H1 (cell line): ENCODE measurements at regions of chr9 and their contacts with region 1.

Region 1: DNA sequence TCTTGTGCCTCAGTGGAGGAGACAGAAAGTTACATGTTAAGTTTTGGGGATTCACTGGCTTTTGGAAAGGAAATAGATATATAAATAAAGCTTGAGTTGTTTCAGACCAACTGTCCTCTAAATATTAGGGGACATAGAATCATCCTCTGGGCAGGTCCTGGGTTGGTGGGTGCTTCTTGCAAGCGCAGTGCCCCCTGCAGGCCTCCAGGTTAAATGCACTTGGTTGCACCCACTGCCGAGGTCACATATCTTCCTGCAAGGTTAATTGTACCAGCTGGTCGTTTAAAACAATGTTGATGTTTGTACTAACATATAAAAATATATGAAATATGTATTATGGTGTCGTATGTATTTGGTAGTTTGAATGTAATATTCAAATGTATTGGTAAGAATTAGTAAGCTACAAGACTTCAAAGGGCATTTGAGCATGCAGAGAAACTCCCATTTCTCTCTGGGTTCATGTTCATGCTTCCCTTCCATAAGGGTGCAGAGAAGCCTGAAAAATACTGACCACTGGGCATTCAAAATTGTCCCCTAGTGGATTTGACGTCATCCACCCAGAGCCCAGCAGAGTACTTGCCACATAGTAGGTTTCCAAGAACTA is 87.0 kb downstream of the ZNF618 start:
- DNase-seq: peak; percentile 31 to 75
- H3K4me3 ChIP-seq: no peak overlapping the region
- H3K27ac ChIP-seq: no peak overlapping the region
- H3K4me1 ChIP-seq: peaks cover 0 to 3% (median 0%) of the 10 kb centered on the region in 4 experiments; a peak in 2 of 7 replicates
- H3K27me3 ChIP-seq: no peaks in the 10 kb centered on the region
- CTCF ChIP-seq: peak; percentile 72 to 81 (median 80)
- EP300 ChIP-seq: no peak
- POLR2A ChIP-seq: no peak
- RAD21 ChIP-seq: peak; percentile 66 to 74

Region 2: GRCh38 chr9:113807173-113808061 is 155.7 kb before region 1 on chr9:
- CTCF ChIA-PET with region 1: interaction called, 21 read pairs
- POLR2A ChIA-PET with region 1: no interaction called
- DNase-seq: peak in 1 of 2 experiments; percentile 80
- H3K4me3 ChIP-seq: no peak overlapping the region
- H3K27ac ChIP-seq: no peak overlapping the region
- H3K4me1 ChIP-seq: 0 out of 7 replicates have a peak, but pooled peaks cover 0 to 3% (median 0%) of the 10 kb centered on the region in 4 experiments
- H3K27me3 ChIP-seq: no peaks in the 10 kb centered on the region
- CTCF ChIP-seq: peak; percentile 53 to 92 (median 77)
- EP300 ChIP-seq: no peak
- POLR2A ChIP-seq: no peak
- RAD21 ChIP-seq: peak; percentile 83 to 84

Region 3: GRCh38 chr9:113915817-113916434 is 47.2 kb before region 1 on chr9:
- CTCF ChIA-PET with region 1: interaction called, 13 read pairs
- POLR2A ChIA-PET with region 1: no interaction called
- DNase-seq: no peak
- H3K4me3 ChIP-seq: no peak overlapping the region
- H3K27ac ChIP-seq: no peak overlapping the region
- H3K4me1 ChIP-seq: 0 out of 7 replicates have a peak, but pooled peaks cover 0 to 1% (median 0%) of the 10 kb centered on the region in 4 experiments
- H3K27me3 ChIP-seq: no peaks in the 10 kb centered on the region
- CTCF ChIP-seq: no peak
- EP300 ChIP-seq: no peak
- POLR2A ChIP-seq: no peak
- RAD21 ChIP-seq: no peak

Region 4: DNA sequence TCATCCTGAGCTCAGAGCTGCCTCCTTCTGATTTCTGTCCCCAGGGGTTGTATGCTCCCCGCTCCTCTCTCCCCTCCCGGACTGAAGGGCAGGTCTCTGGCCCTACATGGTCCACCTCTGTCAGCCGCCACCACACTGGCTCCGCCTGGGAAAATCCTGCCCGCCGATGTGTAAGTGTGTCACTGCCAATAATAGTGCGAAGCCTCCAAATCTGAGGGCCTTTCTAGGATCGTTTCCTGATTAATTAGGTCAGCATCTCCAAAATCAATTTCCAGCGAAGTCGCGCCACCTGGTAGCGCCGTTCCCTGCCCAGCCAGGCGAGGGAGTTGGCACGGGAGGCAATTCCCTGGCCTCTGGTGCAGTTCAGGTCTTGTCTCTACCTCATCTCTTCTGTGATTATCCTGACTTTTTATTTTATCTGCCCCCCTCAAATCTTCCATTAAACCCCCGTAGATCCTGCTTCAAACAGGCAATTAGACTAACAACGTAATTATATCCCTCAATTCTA is 13.5 kb before region 1 on chr9:
- CTCF ChIA-PET with region 1: interaction called, 25 read pairs
- POLR2A ChIA-PET with region 1: interaction called, 3 read pairs
- DNase-seq: peak in 1 of 2 experiments; percentile 39
- H3K4me3 ChIP-seq: no peak overlapping the region
- H3K27ac ChIP-seq: no peak overlapping the region
- H3K4me1 ChIP-seq: no peaks in the 10 kb centered on the region; a peak in 1 of 7 replicates
- H3K27me3 ChIP-seq: no peaks in the 10 kb centered on the region
- CTCF ChIP-seq: peak in 2 of 3 experiments; percentile 12 to 22; a peak in 2 of 4 replicates
- EP300 ChIP-seq: no peak
- POLR2A ChIP-seq: no peak
- RAD21 ChIP-seq: no peak

Region 5: DNA sequence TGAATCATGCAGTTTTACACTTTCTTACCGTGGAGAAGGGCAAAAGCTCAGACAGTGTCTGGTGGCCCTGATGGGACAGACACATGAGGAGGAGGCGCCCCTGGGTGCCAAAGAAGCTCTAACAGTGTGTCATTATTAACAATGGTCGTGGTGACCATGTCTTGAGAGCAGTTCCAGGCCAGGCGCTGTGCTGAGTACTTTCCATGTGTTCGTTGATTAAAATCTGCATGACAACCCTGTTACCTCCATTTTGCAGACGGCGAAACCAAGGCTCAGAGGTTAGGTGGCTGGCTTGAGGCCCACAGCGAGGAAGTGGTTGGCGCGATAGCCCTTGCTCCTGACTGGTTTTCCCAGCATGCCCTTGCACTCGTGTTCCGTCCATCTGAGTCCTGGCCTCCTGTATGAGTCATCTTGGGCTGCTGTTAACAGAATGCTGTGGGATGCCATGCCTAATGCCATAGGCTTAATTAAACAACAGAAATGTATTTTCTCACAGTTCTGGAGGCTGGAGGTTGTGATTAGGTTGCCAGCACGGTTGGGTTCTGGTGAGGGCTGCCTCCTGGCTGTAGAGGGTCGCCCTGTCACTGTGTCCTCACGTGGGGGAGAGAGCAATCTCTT is 23.0 kb after region 1 on chr9:
- CTCF ChIA-PET with region 1: interaction called, 55 read pairs
- POLR2A ChIA-PET with region 1: interaction called, 3 read pairs
- DNase-seq: no peak
- H3K4me3 ChIP-seq: no peak overlapping the region
- H3K27ac ChIP-seq: no peak overlapping the region
- H3K4me1 ChIP-seq: no peaks in the 10 kb centered on the region; a peak in 1 of 7 replicates
- H3K27me3 ChIP-seq: no peaks in the 10 kb centered on the region
- CTCF ChIP-seq: no peak
- EP300 ChIP-seq: no peak
- POLR2A ChIP-seq: no peak
- RAD21 ChIP-seq: no peak

Region 6: DNA sequence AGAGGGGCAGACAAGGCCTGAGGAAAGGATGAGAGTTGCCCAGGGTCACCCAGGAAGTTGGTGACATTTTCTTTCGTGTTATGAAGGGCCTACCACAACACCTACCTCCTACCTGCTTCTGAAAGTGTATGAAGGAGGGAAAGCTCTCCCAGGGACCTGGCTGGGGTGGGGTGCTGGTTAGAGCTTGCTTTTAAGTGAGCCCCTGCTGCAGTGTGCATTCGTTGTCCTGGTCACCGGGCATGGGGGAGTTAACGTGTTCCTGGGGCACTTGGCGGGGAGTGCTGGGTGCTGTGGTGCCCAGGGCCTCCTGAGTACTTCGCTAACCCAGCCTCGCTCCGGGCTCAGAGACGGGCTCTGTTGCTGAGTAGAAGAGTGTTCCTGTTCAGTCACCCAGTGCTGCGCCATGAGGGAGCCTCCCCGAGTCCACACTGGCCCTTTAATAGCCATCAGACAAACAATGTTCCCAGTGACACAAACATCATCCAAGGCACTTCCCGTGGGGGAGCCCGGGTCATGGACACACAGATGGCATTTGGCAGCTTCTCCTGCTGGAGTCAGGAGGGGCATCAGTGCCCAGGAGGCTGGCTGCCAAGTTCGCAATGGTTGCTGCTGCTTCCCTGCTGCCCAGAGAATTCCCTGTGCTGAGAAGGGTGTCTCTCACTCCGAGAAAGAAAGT is 29.3 kb after region 1 on chr9:
- CTCF ChIA-PET with region 1: interaction called, 55 read pairs
- POLR2A ChIA-PET with region 1: no interaction called
- DNase-seq: no peak
- H3K4me3 ChIP-seq: no peak overlapping the region
- H3K27ac ChIP-seq: no peak overlapping the region
- H3K4me1 ChIP-seq: no peaks in the 10 kb centered on the region
- H3K27me3 ChIP-seq: no peaks in the 10 kb centered on the region
- CTCF ChIP-seq: no peak
- EP300 ChIP-seq: no peak
- POLR2A ChIP-seq: no peak
- RAD21 ChIP-seq: no peak

Region 7: GRCh38 chr9:113998525-113999255 is 35.6 kb after region 1 on chr9:
- CTCF ChIA-PET with region 1: interaction called, 15 read pairs
- POLR2A ChIA-PET with region 1: no interaction called
- DNase-seq: peak in 1 of 2 experiments; percentile 53
- H3K4me3 ChIP-seq: no peak overlapping the region
- H3K27ac ChIP-seq: no peak overlapping the region
- H3K4me1 ChIP-seq: no peaks in the 10 kb centered on the region
- H3K27me3 ChIP-seq: no peaks in the 10 kb centered on the region
- CTCF ChIP-seq: peak; percentile 32 to 53 (median 50); a peak in 3 of 4 replicates
- EP300 ChIP-seq: no peak
- POLR2A ChIP-seq: no peak
- RAD21 ChIP-seq: peak; percentile 53 to 60